ENCODE measurements at regions of chr6 and their contacts with region 1.

Region 1: DNA sequence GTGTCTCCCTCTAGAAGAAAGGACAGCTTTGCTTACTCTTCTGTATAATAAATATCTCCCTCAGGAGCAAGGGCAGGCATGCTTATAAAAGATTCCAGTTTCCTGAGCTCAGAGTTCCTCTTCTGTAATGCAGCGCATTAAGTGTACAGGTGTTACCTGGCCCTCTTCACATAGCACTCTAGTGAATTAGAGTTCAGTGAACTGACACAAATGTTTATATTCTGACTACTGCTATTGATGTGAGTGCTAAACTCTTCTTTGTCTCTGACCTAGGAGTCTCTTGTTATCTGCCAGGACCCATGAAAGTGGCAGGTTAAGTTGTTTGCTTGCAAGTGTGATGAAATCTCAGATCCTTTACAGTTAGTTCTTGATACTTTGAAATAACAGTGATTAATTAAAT is 33.5 kb downstream of the CYB5R4 start:
- DNase-seq: no peak
- ATAC-seq: no peak
- H3K4me3 ChIP-seq: no peak overlapping the region
- H3K4me3 Mint-ChIP-seq: no peak overlapping the region
- H3K27ac ChIP-seq: no peak overlapping the region
- H3K27ac Mint-ChIP-seq: no peak overlapping the region
- H3K4me1 ChIP-seq: no peaks in the 10 kb centered on the region
- H3K4me1 Mint-ChIP-seq: peaks cover 32% of the 10 kb centered on the region
- H3K27me3 ChIP-seq: no peaks in the 10 kb centered on the region
- H3K27me3 Mint-ChIP-seq: no peaks in the 10 kb centered on the region
- CTCF ChIP-seq: no peak

Region 2: DNA sequence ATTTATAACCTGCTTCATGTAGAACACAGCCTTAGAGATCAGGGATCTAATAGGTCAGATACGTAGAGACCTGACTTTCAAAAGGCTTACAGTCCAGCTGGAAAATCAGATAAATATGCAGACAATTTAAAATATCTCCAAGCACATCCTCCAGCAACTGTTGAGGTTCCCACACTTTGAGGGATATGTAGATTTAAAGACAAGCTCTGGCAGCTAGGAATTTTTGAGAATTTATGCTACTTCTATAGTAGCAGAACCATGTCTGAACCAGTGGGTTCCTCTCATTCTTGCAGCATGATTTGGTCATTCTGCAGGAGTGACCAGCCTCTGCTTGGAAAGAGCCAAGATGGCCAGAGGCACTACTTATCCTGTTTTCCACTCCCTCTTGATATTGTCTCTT is 27.0 kb after region 1 on chr6:
- CTCF ChIA-PET with region 1: no interaction called
- POLR2A ChIA-PET with region 1: no interaction called
- intact Hi-C with region 1: loop called in 1 of 2 experiments (anchors 1 kb)
- DNase-seq: no peak
- ATAC-seq: no peak
- H3K4me3 ChIP-seq: no peak overlapping the region
- H3K4me3 Mint-ChIP-seq: no peak overlapping the region
- H3K27ac ChIP-seq: no peak overlapping the region
- H3K27ac Mint-ChIP-seq: no peak overlapping the region
- H3K4me1 ChIP-seq: no peaks in the 10 kb centered on the region
- H3K4me1 Mint-ChIP-seq: peaks cover 4% of the 10 kb centered on the region
- H3K27me3 ChIP-seq: no peaks in the 10 kb centered on the region
- H3K27me3 Mint-ChIP-seq: no peaks in the 10 kb centered on the region
- CTCF ChIP-seq: no peak

Measured in CD8-positive, alpha-beta T cell (primary cell).